SK-N-SH (cell line): ENCODE measurements at regions of chr19 and their contacts with region 1.

Region 1: GRCh38 chr19:7852851-7853769 is 21.1 kb downstream of the PRR36 start:
- DNase-seq: peak; percentile 97
- H3K4me3 ChIP-seq: peak overlapping the region in 1 of 2 experiments; percentile 17; a peak in 1 of 4 replicates
- H3K27ac ChIP-seq: no peak overlapping the region
- H3K4me1 ChIP-seq: peaks cover 0 to 14% of the 10 kb centered on the region in 2 experiments; a peak in 1 of 4 replicates
- H3K27me3 ChIP-seq: no peaks in the 10 kb centered on the region
- CTCF ChIP-seq: peak; percentile 82
- EP300 ChIP-seq: no peak
- RAD21 ChIP-seq: peak; percentile 77

Region 2: GRCh38 chr19:7829561-7830271 is 23.4 kb before region 1 on chr19 and contains the start of gene EVI5L:
- CTCF ChIA-PET with region 1: interaction called, 15 read pairs
- POLR2A ChIA-PET with region 1: no interaction called
- DNase-seq: peak; percentile 100
- H3K4me3 ChIP-seq: peak within 1 kb of the TSS; percentile 52 to 60
- H3K27ac ChIP-seq: no peak within 1 kb of the TSS
- H3K4me1 ChIP-seq: peaks cover 0 to 7% of the 10 kb centered on the region in 2 experiments; a peak in 1 of 4 replicates
- H3K27me3 ChIP-seq: peaks cover 32% of the 10 kb centered on the region
- CTCF ChIP-seq: no peak
- EP300 ChIP-seq: peak in 1 of 2 experiments; percentile 32; a peak in 1 of 4 replicates
- RAD21 ChIP-seq: no peak
- polyA plus RNA-seq, gene EVI5L: 8.5 and 9.7 TPM in 2 replicates

Region 3: GRCh38 chr19:7903244-7904073 is 50.3 kb after region 1 on chr19 and contains the start of gene MAP2K7:
- CTCF ChIA-PET with region 1: interaction called, 13 read pairs
- POLR2A ChIA-PET with region 1: no interaction called
- DNase-seq: peak; percentile 99
- H3K4me3 ChIP-seq: peak within 1 kb of the TSS; percentile 80 to 87
- H3K27ac ChIP-seq: peak within 1 kb of the TSS; percentile 68 to 89; a peak in 3 of 4 replicates
- H3K4me1 ChIP-seq: peaks cover 0 to 19% of the 10 kb centered on the region in 2 experiments; a peak in 2 of 4 replicates
- H3K27me3 ChIP-seq: no peaks in the 10 kb centered on the region
- CTCF ChIP-seq: peak; percentile 60
- EP300 ChIP-seq: no peak
- RAD21 ChIP-seq: peak; percentile 54
- polyA plus RNA-seq, gene MAP2K7: 13.0 and 13.6 TPM in 2 replicates

Region 4: DNA sequence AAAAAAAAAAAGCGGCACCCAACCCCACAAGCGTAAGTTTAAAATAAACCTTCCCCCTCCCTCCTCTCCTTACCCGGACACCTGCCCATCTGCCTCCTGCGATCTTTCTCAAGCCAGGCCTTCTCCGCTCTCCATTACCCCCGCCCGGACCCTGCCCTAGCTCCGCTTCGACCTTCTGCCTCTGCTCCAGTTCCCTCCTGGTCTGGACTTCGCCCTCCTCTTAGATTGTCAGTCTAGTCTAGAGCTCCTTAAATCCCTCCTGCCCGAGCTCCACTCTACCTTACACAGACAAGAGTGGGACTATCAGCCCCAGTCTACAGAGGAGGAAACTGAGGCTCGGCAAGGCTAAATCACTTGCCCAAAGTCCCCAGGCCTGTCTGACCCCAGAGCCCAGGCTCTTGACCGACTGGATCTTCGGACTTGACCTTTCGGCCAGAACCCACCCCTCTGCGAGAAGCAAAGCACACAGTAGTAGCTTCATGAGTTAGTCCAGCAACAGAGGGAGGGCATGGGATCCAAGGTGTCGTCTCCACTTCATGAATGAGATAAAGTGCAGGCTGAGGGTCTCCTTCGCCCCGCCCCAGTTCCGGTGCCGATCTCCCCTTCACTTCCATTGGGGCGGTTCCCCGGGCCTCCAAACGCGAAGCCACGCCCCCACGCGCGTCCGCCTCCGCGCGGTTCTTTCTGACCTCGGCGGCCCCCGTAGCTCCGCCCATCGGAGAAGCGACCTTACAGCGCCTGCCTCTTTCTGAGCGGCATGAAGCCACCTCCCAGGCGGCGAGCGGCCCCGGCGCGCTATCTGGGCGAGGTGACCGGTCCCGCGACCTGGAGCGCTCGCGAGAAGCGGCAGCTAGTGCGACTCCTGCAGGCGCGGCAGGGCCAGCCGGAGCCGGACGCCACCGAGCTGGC is 66.8 kb after region 1 on chr19 and contains the start of gene SNAPC2:
- CTCF ChIA-PET with region 1: interaction called, 26 read pairs
- POLR2A ChIA-PET with region 1: no interaction called
- DNase-seq: peak; percentile 90
- H3K4me3 ChIP-seq: peak within 1 kb of the TSS; percentile 77
- H3K27ac ChIP-seq: peak within 1 kb of the TSS; percentile 86 to 92
- H3K4me1 ChIP-seq: peaks cover 10 to 41% of the 10 kb centered on the region in 2 experiments; a peak in 2 of 4 replicates
- H3K27me3 ChIP-seq: peaks cover 7% of the 10 kb centered on the region; the same call in 1 of the 2 replicates
- CTCF ChIP-seq: no peak
- EP300 ChIP-seq: no peak; a peak in 1 of 4 replicates
- RAD21 ChIP-seq: no peak
- polyA plus RNA-seq, gene SNAPC2: 29.7 and 38.7 TPM in 2 replicates

Region 5: GRCh38 chr19:7925171-7925851 is 72.2 kb after region 1 on chr19:
- CTCF ChIA-PET with region 1: interaction called, 18 read pairs
- POLR2A ChIA-PET with region 1: no interaction called
- DNase-seq: peak; percentile 94
- H3K4me3 ChIP-seq: peak overlapping the region; percentile 64 to 72
- H3K27ac ChIP-seq: peak overlapping the region in 1 of 2 experiments; percentile 81; a peak in 2 of 4 replicates
- H3K4me1 ChIP-seq: peaks cover 43 to 63% of the 10 kb centered on the region in 2 experiments
- H3K27me3 ChIP-seq: no peaks in the 10 kb centered on the region
- CTCF ChIP-seq: peak; percentile 83
- EP300 ChIP-seq: no peak
- RAD21 ChIP-seq: peak; percentile 54